ENCODE measurements at regions of chr19 and their contacts with region 1.

Region 1: DNA sequence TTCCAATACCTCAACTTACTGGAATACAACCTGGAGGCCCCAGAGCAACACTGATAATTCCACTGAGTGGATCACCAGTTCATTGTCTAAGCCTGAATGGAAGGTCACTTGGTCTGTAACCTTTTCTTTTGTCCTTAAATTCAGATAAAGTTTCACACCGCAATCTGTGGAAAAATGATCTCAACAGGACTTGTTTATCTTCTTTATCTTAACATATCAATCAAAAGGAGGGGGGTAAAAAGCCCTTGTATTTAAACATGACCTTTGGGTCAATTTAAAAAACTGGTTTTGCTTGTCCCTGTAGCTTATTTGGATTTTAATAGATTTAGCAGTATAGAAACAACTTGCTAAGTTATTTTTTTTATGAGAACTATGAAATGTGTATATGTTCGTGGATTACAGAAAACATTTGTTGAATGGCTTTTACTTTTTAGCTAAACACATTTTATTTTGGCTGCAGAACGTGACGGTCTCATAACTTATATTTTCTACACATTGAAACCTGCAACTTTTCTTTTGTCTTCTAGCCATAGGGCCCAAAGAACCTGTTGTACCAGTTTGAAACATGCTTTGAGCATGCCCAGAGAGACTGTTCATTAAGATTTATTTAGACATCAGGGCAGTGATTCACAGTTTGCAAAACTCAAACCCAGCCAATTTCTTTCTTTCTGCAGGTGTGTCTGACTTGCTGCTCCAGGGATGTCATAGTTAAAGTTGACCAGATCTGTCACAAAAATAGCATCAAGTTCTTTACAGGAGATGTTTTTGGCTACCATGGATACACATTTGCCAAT is 21.8 kb downstream of the SAE1 start:
- DNase-seq: no peak
- H3K4me3 ChIP-seq: no peak overlapping the region
- H3K27ac ChIP-seq: peak overlapping the region; percentile 57 to 85 (median 72)
- H3K4me1 ChIP-seq: peaks cover 16 to 80% (median 57%) of the 10 kb centered on the region in 3 donors
- H3K27me3 ChIP-seq: no peaks in the 10 kb centered on the region
- CTCF ChIP-seq: peak in 1 of 6 experiments; percentile 7
- POLR2A ChIP-seq: no peak

Region 2: DNA sequence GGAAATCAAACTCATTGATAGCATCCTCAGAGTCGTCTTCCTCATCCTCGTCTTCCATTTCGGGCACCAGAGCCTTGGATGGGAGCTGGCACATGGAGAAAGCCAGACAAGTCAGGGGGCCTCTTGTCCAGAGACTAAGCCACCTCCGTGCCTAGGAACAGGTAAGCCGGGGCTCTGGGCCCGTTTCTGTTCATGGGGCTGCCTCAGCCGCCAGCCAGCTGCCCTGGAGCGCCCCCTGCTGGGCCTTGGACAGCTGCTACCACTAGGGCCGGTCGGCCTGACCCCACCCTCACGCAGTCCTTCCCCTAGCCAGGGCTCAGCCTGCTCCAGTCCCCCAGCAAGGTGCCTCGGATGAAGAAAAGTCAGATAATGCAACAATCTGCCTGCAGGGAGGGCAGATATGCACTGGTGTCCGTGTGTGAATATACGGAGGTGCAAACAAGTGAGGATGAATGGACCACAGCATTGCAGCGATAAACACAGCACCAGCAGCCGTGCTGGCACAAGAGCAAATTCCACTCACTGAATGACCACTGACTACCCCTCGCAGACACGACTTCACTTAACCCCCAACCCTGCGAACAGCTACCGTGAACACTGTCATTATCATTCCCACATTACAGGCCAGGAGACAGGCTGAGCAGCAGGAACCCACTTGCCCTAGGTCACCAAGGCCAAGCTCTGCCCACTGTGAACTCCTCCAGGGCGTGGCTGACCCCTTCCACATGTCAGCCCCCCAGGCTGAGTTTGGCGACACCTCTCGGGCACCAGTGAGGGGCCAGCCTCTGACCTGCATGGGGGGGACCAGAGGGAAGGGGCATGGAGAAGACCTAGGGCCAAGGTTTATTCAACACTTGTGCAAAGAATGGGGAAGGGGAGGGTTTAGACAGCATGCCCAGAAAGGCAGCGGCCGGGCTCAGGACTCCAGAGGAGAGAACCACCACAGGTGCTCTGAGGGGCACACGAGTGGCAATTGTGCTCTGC is 423.4 kb before region 1 on chr19:
- intact Hi-C with region 1: no loop called
- DNase-seq: no peak
- H3K4me3 ChIP-seq: no peak overlapping the region
- H3K27ac ChIP-seq: peak overlapping the region in 3 of 4 donors; percentile 11 to 77 (median 38)
- H3K4me1 ChIP-seq: peaks cover 26 to 78% (median 32%) of the 10 kb centered on the region in 3 donors
- H3K27me3 ChIP-seq: no peaks in the 10 kb centered on the region
- CTCF ChIP-seq: peak; percentile 87 to 96 (median 91)
- POLR2A ChIP-seq: no peak

Region 3: DNA sequence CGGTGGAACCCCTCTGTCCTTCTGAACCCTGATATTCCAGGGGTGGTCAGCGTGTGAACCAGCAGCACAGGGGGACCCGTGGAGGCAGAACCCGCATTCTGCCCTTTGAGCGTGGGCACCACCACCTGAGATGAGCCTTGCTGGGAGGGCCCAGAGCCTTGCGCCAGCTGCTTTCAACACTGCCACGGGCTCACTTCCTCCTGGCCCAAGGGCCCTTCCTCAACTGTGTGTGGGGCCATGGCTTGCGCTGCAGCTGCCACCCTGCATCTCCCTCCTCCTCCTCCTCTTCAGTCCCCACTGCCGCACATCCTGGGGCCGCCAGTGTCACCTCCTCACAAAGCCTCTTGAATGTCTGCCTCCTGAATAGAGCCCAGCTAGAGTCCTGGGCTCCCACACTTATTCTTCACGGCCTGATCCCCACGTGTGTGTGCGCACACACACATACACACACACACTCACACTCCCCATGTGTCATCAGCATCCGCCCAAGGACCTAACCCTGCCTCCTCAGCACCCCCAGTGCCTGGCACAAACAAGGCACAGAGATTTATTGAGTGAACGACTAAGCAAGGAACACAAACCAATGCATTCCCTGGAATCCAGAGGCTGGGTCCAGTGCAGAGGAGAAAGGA is 77.1 kb before region 1 on chr19:
- intact Hi-C with region 1: no loop called
- DNase-seq: no peak
- H3K4me3 ChIP-seq: no peak overlapping the region
- H3K27ac ChIP-seq: no peak overlapping the region
- H3K4me1 ChIP-seq: peaks cover 0 to 9% (median 4%) of the 10 kb centered on the region in 3 donors
- H3K27me3 ChIP-seq: no peaks in the 10 kb centered on the region
- CTCF ChIP-seq: no peak
- POLR2A ChIP-seq: no peak

Region 4: GRCh38 chr19:47094557-47095475 is 57.6 kb before region 1 on chr19:
- intact Hi-C with region 1: no loop called
- DNase-seq: no peak
- H3K4me3 ChIP-seq: peak overlapping the region in 3 of 4 donors; percentile 3 to 11 (median 5)
- H3K27ac ChIP-seq: peak overlapping the region; percentile 88 to 94 (median 90)
- H3K4me1 ChIP-seq: peaks cover 31 to 70% (median 44%) of the 10 kb centered on the region in 3 donors
- H3K27me3 ChIP-seq: no peaks in the 10 kb centered on the region
- CTCF ChIP-seq: no peak
- POLR2A ChIP-seq: no peak

Region 5: DNA sequence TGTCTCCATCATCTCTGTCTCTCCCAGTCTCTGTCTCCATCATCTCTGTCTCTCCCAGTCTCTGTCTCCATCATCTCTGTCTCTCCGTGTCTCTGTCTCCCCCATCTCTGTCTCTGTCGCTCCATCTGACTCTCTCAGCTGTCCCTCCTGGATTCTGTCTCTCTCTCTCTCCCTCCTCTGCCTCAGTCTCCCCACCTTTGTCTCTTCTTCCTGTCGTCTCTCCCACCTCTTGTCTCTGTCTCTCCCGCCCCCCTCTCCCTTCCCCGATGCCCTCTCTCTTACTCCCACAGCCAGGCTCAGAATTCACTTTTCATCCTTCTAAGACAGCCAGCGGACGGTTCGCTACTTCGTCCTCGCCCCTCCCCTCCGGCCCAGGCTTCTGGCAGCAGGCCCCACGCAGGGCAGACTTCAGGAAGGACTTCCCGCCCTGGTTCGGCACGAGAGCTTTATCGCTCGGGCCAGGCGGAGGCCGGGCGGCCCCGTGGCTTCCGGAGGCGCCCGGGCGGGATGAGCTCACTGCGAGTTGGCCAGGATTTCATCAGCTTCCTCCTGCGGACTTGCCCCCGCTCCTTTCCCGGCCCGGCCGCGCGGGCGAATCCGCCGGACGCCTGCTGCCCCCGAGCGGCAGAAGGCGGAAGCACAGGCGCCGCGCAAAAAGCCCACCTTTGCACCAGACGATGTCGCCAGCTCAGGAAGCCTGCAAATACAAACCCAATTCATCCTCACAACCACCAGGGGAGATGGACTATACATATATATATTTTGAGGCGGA is 91.5 kb after region 1 on chr19:
- intact Hi-C with region 1: loop called (anchors 5 kb)
- DNase-seq: no peak
- H3K4me3 ChIP-seq: peak overlapping the region in 3 of 4 donors; percentile 39 to 53 (median 39)
- H3K27ac ChIP-seq: peak overlapping the region; percentile 63 to 77 (median 65)
- H3K4me1 ChIP-seq: peaks cover 33 to 51% (median 35%) of the 10 kb centered on the region in 3 donors
- H3K27me3 ChIP-seq: peaks cover 0 to 45% (median 0%) of the 10 kb centered on the region in 4 donors
- CTCF ChIP-seq: peak; percentile 99 to 100 (median 99)
- POLR2A ChIP-seq: peak in 1 of 4 donors; percentile 37

Measured in esophagus squamous epithelium (tissue), 5 donors.